Panc1 (cell line): ENCODE measurements at regions of chr15 and their contacts with region 1.

Region 1: DNA sequence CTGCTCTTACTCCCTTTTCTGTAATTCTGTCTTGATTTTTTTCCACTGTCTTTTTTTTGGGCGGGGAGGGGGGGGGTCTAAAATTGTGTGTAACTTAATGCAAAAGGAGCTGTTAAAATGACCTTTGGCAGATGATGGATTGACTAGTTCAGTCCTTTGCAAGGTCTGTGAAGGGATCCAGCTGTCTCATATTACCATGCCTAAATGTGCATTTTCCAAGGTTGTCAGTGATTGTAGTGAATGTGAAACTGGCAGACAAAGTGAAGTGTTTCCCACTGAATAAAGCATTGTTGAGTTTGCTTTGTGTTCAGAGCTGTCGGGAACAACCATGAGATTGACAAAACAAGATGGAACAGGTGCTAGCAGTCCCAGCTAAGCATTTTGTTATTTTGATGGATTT is 110.1 kb upstream of the SKOR1 start:
- DNase-seq: no peak
- ATAC-seq: no peak
- H3K4me3 ChIP-seq: no peak overlapping the region
- H3K27ac ChIP-seq: no peak overlapping the region
- H3K4me1 ChIP-seq: no peaks in the 10 kb centered on the region
- H3K27me3 ChIP-seq: no peaks in the 10 kb centered on the region
- CTCF ChIP-seq: no peak

Region 2: DNA sequence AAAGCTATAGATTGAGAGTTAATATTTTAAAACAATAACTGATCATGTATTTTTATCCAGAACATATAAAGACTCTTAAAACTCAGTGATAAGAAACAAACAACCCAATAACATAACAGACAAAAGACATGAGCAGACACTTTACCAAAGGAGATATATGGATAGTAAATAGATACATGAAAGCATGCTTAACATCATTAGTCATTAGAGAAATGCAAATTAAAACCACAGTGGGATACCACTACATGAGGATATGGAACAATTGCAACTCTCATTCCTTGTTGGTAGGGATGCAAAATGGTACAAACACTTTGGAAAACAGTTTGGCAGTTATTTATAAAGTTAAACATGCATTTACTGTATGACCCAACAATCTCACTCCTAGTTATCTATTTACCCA is 365.5 kb before region 1 on chr15:
- CTCF ChIA-PET with region 1: no interaction called
- POLR2A ChIA-PET with region 1: interaction called, 11 read pairs
- in situ Hi-C with region 1: no loop called
- intact Hi-C with region 1: no loop called
- DNase-seq: no peak
- ATAC-seq: no peak
- H3K4me3 ChIP-seq: no peak overlapping the region
- H3K27ac ChIP-seq: no peak overlapping the region
- H3K4me1 ChIP-seq: no peaks in the 10 kb centered on the region
- H3K27me3 ChIP-seq: no peaks in the 10 kb centered on the region
- CTCF ChIP-seq: no peak